ENCODE measurements at regions of chr10 and their contacts with region 1.

Region 1: DNA sequence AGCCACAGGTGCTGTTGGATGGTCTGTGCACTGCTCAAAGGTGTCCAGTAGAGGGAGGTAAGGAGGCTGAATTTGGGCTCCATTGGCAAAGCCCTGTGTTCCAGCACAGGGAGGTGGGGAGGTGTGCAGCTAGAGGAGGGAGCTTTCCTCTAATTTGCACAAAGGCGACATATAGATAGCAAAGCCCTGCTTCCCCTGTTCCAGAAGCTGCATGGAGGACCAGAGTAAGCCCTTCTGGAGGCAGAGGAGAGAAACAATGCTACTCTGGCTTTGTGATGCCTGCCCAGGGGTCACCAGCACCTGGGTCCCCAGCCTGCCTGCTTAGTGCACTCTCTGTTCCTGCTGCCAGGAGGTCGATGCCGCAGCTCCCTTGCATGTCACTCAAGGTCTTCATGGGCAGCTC is 3.4 kb upstream of the ARHGAP22 start:
- DNase-seq: peak; percentile 48
- H3K4me3 ChIP-seq: no peak overlapping the region
- H3K27ac ChIP-seq: no peak overlapping the region
- H3K4me1 ChIP-seq: peaks cover 59% of the 10 kb centered on the region
- H3K27me3 ChIP-seq: no peaks in the 10 kb centered on the region
- CTCF ChIP-seq: peak; percentile 90 to 94

Region 2: DNA sequence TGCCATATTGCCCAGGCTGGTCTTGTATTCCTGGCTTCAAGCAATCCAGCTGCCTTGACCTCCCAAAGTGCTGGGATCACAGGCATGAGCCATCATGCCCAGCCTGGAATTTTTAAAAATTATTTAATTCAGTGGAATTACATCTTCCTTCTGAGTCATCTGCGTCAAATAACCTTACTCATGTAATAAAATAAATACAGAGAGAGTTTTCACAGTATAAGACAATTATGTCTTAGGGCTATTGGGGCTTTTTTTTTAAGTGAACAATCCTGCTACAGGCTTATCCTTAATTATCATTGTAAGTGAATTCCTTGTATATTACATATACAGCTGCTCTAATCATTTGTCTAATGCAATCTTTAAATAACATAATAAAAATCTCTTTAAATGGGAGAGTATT is 193.5 kb before region 1 on chr10:
- CTCF ChIA-PET with region 1: interaction called, 7 read pairs
- dilution Hi-C with region 1: no loop called
- in situ Hi-C with region 1: no loop called
- intact Hi-C with region 1: loop called (anchors 5 kb)
- DNase-seq: peak; percentile 77
- H3K4me3 ChIP-seq: no peak overlapping the region
- H3K27ac ChIP-seq: peak overlapping the region; percentile 6
- H3K4me1 ChIP-seq: peaks cover 40% of the 10 kb centered on the region
- H3K27me3 ChIP-seq: no peaks in the 10 kb centered on the region
- CTCF ChIP-seq: no peak

Region 3: DNA sequence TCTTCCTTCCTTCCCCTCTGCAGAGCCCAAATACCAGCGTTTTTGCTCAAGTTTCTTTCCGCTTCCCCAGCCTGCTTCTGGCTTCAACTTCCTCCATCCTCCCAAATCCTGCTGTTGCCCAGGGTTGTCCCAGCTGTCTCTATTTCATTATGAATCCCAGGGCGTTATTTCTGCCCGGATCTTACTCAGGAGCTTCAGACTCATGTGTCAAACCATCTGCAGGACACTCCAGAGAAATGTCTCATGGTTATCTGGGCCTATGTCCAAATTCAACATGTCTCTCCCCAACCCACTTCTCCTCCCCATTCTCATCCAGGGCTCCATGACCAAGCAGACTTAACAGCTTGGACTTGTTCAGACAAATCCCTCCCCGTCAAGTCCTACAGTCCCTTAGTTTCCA is 19.0 kb before region 1 on chr10:
- CTCF ChIA-PET with region 1: no interaction called
- dilution Hi-C with region 1: no loop called
- in situ Hi-C with region 1: no loop called
- intact Hi-C with region 1: loop called (anchors 1 kb)
- DNase-seq: peak; percentile 93
- H3K4me3 ChIP-seq: no peak overlapping the region
- H3K27ac ChIP-seq: peak overlapping the region; percentile 80
- H3K4me1 ChIP-seq: peaks cover 32% of the 10 kb centered on the region
- H3K27me3 ChIP-seq: no peaks in the 10 kb centered on the region
- CTCF ChIP-seq: no peak